Thyroid gland (tissue), 4 donors: ENCODE measurements at regions of chr6 and their contacts with region 1.

Region 1: DNA sequence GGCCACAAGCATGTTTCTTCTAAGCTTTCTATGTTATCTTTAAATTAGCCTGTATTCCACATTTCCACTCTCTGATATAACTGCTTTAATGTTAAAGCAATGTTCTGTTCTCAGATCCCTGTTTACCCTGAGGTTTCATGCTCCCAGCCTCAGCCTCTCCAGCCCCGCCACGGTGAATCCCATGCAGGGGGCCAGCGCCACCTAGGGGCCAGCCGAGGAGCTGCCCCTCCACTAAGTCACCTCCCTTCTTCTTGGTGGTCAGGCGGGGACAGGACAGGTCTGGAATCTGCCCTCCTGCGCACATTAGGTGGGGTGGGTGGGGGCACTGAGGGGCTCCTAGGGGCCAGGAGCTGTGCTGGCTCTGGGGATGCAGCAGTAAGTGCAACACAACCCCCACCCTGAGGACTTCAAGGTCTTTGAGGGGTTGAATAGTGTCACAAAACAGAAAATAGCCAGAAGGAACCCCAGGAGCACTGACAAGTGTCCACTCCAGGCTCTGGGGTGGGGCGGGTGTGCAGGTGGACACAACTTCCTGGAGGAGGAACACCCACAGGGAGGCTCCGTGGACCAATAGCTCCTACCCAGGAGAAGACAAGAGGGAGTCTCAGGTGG is 61.6 kb downstream of the RAB44 start:
- DNase-seq: peak; percentile 79 to 82
- H3K4me3 ChIP-seq: no peak overlapping the region
- H3K27ac ChIP-seq: no peak overlapping the region
- H3K4me1 ChIP-seq: peaks cover 0 to 3% of the 10 kb centered on the region in 2 donors
- H3K27me3 ChIP-seq: no peaks in the 10 kb centered on the region
- CTCF ChIP-seq: peak; percentile 83 to 100 (median 96)
- POLR2A ChIP-seq: no peak

Region 2: GRCh38 chr6:36423101-36423824 is 336.0 kb before region 1 on chr6:
- intact Hi-C with region 1: loop called (anchors 10 kb)
- DNase-seq: peak; percentile 100
- H3K4me3 ChIP-seq: peak overlapping the region in 2 of 3 donors; percentile 38 to 45
- H3K27ac ChIP-seq: peak overlapping the region; percentile 61 to 79 (median 74)
- H3K4me1 ChIP-seq: peaks cover 0 to 6% of the 10 kb centered on the region in 2 donors
- H3K27me3 ChIP-seq: no peaks in the 10 kb centered on the region
- CTCF ChIP-seq: peak; percentile 23 to 78 (median 66)
- POLR2A ChIP-seq: peak in 1 of 2 donors; percentile 76

Region 3: GRCh38 chr6:36724514-36725390 is 34.5 kb before region 1 on chr6:
- intact Hi-C with region 1: loop called (anchors 5 kb)
- DNase-seq: peak; percentile 88 to 91
- H3K4me3 ChIP-seq: no peak overlapping the region
- H3K27ac ChIP-seq: no peak overlapping the region
- H3K4me1 ChIP-seq: no peaks in the 10 kb centered on the region
- H3K27me3 ChIP-seq: no peaks in the 10 kb centered on the region
- CTCF ChIP-seq: peak; percentile 33 to 88 (median 65)
- POLR2A ChIP-seq: no peak